ENCODE measurements at regions of chr7 and their contacts with region 1.

Region 1: DNA sequence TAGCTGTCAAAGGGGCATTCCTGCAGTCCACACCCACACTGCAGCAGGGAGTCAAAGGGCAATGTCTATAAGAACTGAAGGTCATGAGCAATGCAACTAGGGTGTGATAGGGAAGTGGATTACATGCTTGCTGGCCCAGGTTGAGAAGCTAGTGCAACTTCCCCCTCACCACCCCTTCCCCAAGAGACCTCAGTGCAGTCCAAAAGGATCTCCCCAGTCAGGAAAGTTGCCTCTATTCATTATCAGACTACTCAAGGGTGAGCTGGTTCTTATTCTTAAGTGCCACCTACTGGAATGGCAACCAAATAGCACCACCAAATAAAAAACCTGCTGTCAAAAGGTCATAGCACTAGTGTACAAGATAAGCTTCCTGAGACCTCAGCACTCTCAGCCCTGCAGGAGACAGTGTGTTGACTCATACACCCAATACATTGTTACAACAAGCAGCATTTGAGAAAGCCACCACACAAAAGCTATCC is 28.2 kb downstream of the MTERF1 start:
- DNase-seq: no peak
- H3K4me3 ChIP-seq: no peak overlapping the region
- H3K27ac ChIP-seq: no peak overlapping the region
- H3K4me1 ChIP-seq: no peaks in the 10 kb centered on the region
- H3K27me3 ChIP-seq: no peaks in the 10 kb centered on the region
- CTCF ChIP-seq: peak in 2 of 3 experiments; percentile 48 to 58; a peak in 3 of 4 replicates
- EP300 ChIP-seq: no peak
- POLR2A ChIP-seq: no peak
- RAD21 ChIP-seq: peak; percentile 70 to 75

Region 2: GRCh38 chr7:91835846-91836368 is 16.4 kb before region 1 on chr7:
- CTCF ChIA-PET with region 1: interaction called, 14 read pairs
- POLR2A ChIA-PET with region 1: no interaction called
- DNase-seq: no peak
- H3K4me3 ChIP-seq: no peak overlapping the region
- H3K27ac ChIP-seq: no peak overlapping the region
- H3K4me1 ChIP-seq: no peaks in the 10 kb centered on the region
- H3K27me3 ChIP-seq: no peaks in the 10 kb centered on the region
- CTCF ChIP-seq: no peak
- EP300 ChIP-seq: no peak
- POLR2A ChIP-seq: no peak
- RAD21 ChIP-seq: no peak

Region 3: DNA sequence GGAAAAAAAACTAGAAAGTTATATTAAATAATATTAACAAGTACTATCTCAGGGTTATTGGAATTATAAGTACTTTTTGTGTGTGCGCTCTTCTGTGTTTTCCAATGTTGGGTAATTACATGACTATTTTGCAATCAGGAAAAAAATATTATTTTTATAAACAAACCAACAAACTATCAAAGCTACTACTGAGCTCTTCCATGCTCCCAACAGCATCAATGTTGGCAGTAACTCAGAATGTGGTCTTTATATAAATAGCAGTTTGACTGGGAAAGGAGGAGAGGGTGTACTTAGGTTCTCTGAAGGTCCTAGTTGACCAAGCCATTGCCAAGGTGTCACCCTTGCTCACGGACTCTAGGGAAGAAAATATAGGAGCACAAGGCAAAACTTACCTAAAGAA is 13.2 kb after region 1 on chr7:
- CTCF ChIA-PET with region 1: interaction called, 10 read pairs
- POLR2A ChIA-PET with region 1: interaction called, 4 read pairs
- DNase-seq: no peak
- H3K4me3 ChIP-seq: no peak overlapping the region
- H3K27ac ChIP-seq: no peak overlapping the region
- H3K4me1 ChIP-seq: no peaks in the 10 kb centered on the region
- H3K27me3 ChIP-seq: no peaks in the 10 kb centered on the region
- CTCF ChIP-seq: no peak
- EP300 ChIP-seq: no peak
- POLR2A ChIP-seq: no peak
- RAD21 ChIP-seq: no peak